ENCODE measurements at regions of chr17 and their contacts with region 1.

Region 1: DNA sequence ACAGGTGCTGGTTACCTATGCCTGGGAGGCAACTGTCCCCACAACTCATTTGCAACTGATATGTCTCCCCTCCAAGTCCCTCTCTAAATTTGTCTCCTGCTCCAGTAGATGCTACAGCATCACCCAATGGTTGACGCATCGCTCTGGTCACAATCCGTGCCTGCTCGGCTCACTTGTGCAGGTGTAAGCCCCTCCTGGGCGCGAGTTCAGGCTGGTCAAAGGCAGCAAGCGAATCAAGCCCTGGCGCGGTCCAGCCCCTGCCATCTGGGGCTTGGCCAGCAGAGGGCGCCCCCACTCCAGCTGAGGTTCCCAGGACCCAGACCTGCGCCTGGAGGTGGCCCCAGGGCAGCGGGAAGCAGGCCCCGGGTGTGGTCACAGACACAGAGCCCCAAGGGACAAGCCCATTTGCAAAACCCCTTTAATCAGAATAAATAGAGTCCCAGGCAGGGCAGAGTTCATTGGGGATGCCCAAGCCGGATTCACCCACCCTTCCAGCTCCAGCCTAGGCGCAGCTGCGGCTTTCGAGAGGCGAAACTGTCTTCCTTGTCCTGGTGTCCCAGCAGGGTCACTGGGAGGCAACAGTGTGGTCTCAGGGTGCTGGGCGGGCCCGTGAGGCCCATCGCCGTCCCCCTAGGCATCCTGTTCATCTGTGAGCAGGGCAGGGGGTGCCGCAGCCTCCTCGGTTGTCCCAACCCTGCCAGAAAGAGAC is 15.9 kb downstream of the TMC6 start:
- DNase-seq: peak; percentile 73 to 96
- ATAC-seq: peak; percentile 78 to 92
- H3K4me3 ChIP-seq: no peak overlapping the region
- H3K27ac ChIP-seq: peak overlapping the region in 1 of 2 experiments; percentile 3; a peak in 1 of 6 replicates
- H3K4me1 ChIP-seq: no peaks in the 10 kb centered on the region
- CTCF ChIP-seq: peak; percentile 97
- EP300 ChIP-seq: no peak
- POLR2A ChIP-seq: no peak
- RAD21 ChIP-seq: peak; percentile 98

Region 2: GRCh38 chr17:78019367-78019975 is 93.2 kb before region 1 on chr17:
- CTCF ChIA-PET with region 1: interaction called, 17 read pairs
- POLR2A ChIA-PET with region 1: no interaction called
- DNase-seq: peak in 1 of 2 experiments; percentile 53
- ATAC-seq: peak in 1 of 2 experiments; percentile 70; a peak in 3 of 6 replicates
- H3K4me3 ChIP-seq: no peak overlapping the region
- H3K27ac ChIP-seq: no peak overlapping the region
- H3K4me1 ChIP-seq: no peaks in the 10 kb centered on the region
- CTCF ChIP-seq: peak; percentile 86
- EP300 ChIP-seq: no peak
- POLR2A ChIP-seq: no peak
- RAD21 ChIP-seq: peak; percentile 77 to 82

Region 3: GRCh38 chr17:78089576-78090281 is 22.9 kb before region 1 on chr17:
- CTCF ChIA-PET with region 1: interaction called, 99 read pairs
- POLR2A ChIA-PET with region 1: no interaction called
- DNase-seq: no peak
- ATAC-seq: no peak
- H3K4me3 ChIP-seq: no peak overlapping the region
- H3K27ac ChIP-seq: no peak overlapping the region
- H3K4me1 ChIP-seq: no peaks in the 10 kb centered on the region
- CTCF ChIP-seq: no peak
- EP300 ChIP-seq: no peak
- POLR2A ChIP-seq: no peak
- RAD21 ChIP-seq: no peak

Region 4: GRCh38 chr17:78140169-78140976 is 27.7 kb after region 1 on chr17:
- CTCF ChIA-PET with region 1: interaction called, 185 read pairs
- POLR2A ChIA-PET with region 1: no interaction called
- DNase-seq: peak; percentile 90 to 100
- ATAC-seq: peak; percentile 61 to 84
- H3K4me3 ChIP-seq: peak overlapping the region; percentile 33
- H3K27ac ChIP-seq: peak overlapping the region; percentile 61 to 87
- H3K4me1 ChIP-seq: peaks cover 46% of the 10 kb centered on the region
- CTCF ChIP-seq: no peak
- EP300 ChIP-seq: no peak
- POLR2A ChIP-seq: peak; percentile 71
- RAD21 ChIP-seq: no peak

Region 5: GRCh38 chr17:78168242-78168902 is 55.7 kb after region 1 on chr17 and contains the start of gene SYNGR2:
- CTCF ChIA-PET with region 1: interaction called, 199 read pairs
- POLR2A ChIA-PET with region 1: no interaction called
- DNase-seq: peak; percentile 83 to 97
- ATAC-seq: peak; percentile 64 to 66
- H3K4me3 ChIP-seq: peak within 1 kb of the TSS; percentile 89
- H3K27ac ChIP-seq: peak within 1 kb of the TSS; percentile 86 to 96
- H3K4me1 ChIP-seq: peaks cover 26% of the 10 kb centered on the region
- CTCF ChIP-seq: no peak
- EP300 ChIP-seq: no peak
- POLR2A ChIP-seq: peak; percentile 76
- RAD21 ChIP-seq: no peak
- polyA plus RNA-seq, gene SYNGR2: 113 and 133 TPM in 2 replicates

Region 6: DNA sequence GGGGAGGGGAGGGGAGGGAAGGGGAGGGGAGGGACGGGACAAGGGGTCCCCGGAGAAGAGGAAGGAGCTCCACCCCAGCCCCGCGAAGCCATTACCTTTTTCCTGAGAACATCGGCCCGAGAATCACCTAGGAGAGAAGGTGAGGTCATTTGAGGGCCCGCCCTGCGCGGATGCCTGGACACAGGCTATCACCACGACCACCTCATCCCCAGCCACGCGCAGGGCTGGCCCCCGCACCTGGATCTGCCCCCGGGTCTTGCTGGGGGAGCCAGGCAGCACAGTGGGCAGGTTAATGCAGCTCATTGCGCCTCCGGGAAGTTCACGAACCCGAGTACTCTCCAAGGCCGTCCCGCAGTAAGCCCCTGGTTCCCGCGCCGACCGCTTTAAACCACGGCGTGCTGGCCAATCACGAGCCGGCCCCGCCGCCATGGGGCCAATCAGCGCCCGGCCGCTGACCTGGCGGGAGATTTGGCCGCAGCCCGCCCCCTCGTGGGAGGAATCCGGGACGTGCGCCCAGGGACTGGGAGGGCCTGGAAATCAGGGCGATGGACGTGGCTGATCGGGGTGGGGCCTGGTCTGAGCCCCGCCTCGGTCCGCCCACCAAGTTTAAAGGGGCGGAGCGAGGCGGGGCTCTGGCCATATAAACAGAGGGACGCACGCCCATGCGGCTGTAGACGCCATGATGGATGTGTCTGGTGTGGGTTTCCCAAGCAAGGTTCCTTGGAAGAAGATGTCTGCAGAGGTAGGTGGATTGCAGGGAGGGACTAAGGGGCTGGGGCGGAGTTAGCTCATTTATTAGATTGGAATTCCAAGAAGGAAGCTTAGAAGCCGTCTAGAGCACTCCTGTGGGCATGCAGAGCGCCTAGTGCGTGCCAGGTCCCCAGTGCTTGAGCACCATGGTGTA is 74.3 kb after region 1 on chr17 and contains the starts of genes AFMID and TK1:
- CTCF ChIA-PET with region 1: interaction called, 12 read pairs
- POLR2A ChIA-PET with region 1: no interaction called
- DNase-seq: peak; percentile 99 to 100
- ATAC-seq: peak; percentile 93 to 94
- H3K4me3 ChIP-seq: peak within 1 kb of the TSS; percentile 72
- H3K27ac ChIP-seq: peak within 1 kb of the TSS; percentile 82 to 88
- H3K4me1 ChIP-seq: peaks cover 32% of the 10 kb centered on the region
- CTCF ChIP-seq: peak; percentile 89
- EP300 ChIP-seq: no peak
- POLR2A ChIP-seq: peak; percentile 95
- RAD21 ChIP-seq: peak in 1 of 2 experiments; percentile 29; a peak in 1 of 5 replicates
- polyA plus RNA-seq, gene AFMID: 33.4 and 59.8 TPM in 2 replicates
- polyA plus RNA-seq, gene TK1: 86.1 and 90.9 TPM in 2 replicates

Region 7: DNA sequence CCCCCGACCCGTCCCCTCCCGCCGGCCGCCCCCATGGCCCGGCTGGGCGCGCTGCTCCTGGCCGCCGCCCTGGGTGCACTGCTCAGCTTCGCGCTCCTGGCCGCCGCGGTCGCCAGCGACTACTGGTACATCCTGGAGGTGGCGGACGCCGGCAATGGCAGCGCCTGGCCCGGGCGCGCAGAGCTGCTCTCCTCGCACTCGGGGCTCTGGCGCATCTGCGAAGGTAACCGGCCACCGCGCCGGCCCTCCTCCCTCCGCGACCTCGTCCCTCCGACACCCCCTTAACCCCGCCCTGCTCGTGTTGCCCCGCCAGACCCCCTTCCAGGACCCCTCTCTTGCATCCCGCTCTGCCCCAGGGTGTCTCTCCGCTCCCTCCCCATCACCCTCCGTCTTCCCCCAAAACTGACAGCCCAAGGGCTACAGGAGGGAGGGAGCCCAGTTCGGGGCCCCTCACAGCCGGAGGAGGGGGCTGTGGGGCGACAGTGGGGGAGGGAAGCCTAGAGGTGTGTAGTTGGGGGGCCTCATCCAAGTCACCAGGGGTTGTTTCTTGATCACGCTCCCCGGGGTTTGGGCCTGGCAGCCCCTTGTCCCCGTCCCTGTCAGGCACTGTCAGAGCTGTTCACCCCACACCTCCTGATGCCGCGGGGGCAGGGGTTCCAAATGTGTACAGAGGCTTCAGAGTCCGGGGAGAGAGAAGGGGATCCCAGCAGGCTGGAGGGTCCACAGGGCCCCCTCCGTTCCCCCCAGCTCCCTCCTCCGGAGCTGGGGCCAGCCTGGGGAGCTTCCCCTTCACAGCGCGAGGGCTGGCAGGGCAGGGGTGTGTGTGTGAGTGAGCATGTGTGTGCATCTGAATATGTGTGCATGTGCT is 119.6 kb after region 1 on chr17:
- CTCF ChIA-PET with region 1: no interaction called
- POLR2A ChIA-PET with region 1: no interaction called
- DNase-seq: no peak
- ATAC-seq: peak in 1 of 2 experiments; percentile 38; a peak in 3 of 6 replicates
- H3K4me3 ChIP-seq: peak overlapping the region; percentile 35; the same call in 2 of the 3 replicates
- H3K27ac ChIP-seq: peak overlapping the region in 1 of 2 experiments; percentile 61; a peak in 2 of 6 replicates
- H3K4me1 ChIP-seq: no peaks in the 10 kb centered on the region; the same call in 2 of the 3 replicates
- CTCF ChIP-seq: no peak
- EP300 ChIP-seq: no peak
- POLR2A ChIP-seq: no peak
- RAD21 ChIP-seq: no peak

Measured in A549 (cell line).